HEK293 (cell line): ENCODE measurements at regions of chr2 and their contacts with region 1.

Region 1: GRCh38 chr2:195649629-195650190 is 7.3 kb upstream of the SLC39A10 start:
- H3K4me3 ChIP-seq: no peak overlapping the region
- H3K27ac ChIP-seq: no peak overlapping the region
- H3K4me1 ChIP-seq: no peaks in the 10 kb centered on the region
- CTCF ChIP-seq: no peak

Region 2: DNA sequence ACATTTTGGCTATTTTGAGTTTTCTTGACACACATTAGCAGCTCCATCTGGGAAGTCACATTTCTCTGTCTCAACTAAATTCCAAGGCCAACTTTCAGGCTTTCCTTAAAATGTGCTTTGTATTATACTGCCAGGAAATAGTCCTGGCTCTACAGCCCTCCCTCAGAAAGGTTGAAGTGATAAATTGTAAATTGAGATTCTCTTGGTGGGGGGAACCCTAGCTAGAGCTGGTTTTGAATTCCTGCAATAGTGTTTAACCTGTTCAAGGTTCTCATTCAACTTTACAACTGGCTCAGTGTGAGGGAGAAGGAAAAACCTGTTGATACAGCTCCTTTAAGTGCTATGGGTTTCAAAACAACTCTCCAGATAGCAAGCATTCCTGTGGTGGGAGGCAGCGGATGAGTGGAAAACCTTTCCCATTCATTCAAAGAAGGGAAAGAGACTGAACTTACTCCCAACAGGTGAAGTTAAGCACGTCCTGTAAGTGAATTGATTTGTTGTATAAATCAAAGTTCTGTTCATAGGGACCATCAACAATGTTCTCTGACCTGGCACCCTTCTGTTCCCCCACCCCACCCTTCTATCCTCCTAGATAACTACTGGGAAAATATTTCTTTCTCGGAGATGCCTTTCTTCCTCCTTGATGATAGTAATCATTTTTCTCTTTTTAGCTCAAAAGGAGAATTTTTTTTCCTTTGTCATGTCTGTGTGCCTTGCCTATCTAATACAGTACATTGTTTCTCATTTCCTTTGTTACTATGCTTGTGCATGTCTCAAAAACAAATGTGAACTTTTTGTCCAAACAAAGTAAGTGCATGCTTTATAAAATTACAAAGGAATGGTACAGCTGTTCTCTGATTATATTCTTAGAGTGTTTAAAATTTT is 36.9 kb before region 1 on chr2:
- CTCF ChIA-PET with region 1: interaction called, 14 read pairs
- POLR2A ChIA-PET with region 1: no interaction called
- H3K4me3 ChIP-seq: peak overlapping the region; percentile 9; the same call in 1 of the 2 replicates
- H3K27ac ChIP-seq: no peak overlapping the region
- H3K4me1 ChIP-seq: peaks cover 2% of the 10 kb centered on the region; the same call in 1 of the 2 replicates
- CTCF ChIP-seq: no peak

Region 3: GRCh38 chr2:196195302-196195701 is 545.6 kb after region 1 on chr2:
- CTCF ChIA-PET with region 1: no interaction called
- POLR2A ChIA-PET with region 1: interaction called, 10 read pairs
- H3K4me3 ChIP-seq: no peak overlapping the region
- H3K27ac ChIP-seq: no peak overlapping the region
- H3K4me1 ChIP-seq: no peaks in the 10 kb centered on the region
- CTCF ChIP-seq: no peak